Dorsolateral prefrontal cortex (tissue), 120 donors: ENCODE measurements at regions of chr16 and their contacts with region 1.

Region 1: DNA sequence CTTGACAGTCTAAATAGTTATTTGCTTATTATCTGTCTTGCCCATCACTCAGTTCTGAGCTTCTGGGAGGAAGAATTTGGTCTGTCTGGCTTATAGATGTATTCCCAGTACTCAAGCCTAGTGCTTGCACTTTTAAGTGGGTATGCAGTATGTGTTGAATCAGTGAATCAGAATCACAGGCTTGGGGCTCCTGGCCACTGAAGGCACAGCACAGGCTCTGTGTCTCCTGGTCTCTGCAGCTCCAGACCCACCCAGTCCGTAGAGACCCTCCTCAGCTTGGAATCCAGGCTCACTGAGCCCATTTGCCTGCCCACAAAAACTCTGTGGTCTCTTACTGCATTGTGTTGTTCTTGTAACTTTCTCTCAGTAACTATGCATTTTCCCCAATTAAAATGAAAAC is 19.3 kb upstream of the CFAP20 start:
- DNase-seq: no peak
- H3K4me3 ChIP-seq: no peak overlapping the region
- H3K27ac ChIP-seq: no peak overlapping the region
- H3K27me3 ChIP-seq: no peaks in the 10 kb centered on the region
- CTCF ChIP-seq: no peak

Region 2: DNA sequence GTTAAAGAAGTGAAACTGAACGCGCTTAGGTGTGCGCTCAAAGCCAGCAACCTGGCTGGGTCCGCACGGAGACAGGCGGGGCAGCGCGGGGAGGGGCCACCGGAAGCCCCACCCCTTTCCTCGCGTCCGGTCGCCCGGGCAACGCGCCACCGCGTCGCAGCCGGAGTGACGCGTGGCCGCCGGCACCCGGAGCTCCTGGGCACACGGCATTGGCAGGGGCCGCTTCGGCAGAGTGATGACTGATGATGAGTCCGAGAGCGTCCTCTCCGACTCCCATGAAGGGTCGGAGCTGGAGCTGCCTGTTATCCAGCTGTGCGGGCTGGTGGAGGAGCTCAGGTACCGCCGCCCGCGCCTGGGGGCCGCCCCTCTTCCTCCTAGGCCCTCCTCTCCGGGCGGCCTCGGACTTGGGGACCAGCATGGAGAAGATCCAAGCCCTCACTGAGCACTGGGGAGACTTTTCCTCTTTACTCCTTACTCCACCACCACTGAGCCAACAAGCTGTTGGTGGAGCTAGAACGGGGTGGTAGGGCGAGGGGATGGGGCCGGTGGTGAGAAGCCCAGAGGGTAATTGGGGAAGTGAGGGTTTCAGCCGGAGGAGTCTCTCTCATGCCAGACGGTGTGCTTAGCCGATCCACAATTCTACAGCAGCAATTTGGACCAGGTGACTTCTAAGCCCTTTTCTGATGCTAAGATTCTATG is 101.4 kb after region 1 on chr16:
- intact Hi-C with region 1: loop called in 1 of 2 experiments (anchors 10 kb)
- DNase-seq: peak; percentile 48 to 92 (median 76)
- H3K4me3 ChIP-seq: peak overlapping the region; percentile 53 to 97 (median 79)
- H3K27ac ChIP-seq: peak overlapping the region in 39 of 59 donors; percentile 2 to 76 (median 53)
- H3K27me3 ChIP-seq: peaks cover 0 to 3% (median 0%) of the 10 kb centered on the region in 45 donors
- CTCF ChIP-seq: peak in 13 of 56 donors; percentile 10 to 38 (median 27)